Caco-2 (cell line): ENCODE measurements at regions of chr17 and their contacts with region 1.

Region 1: DNA sequence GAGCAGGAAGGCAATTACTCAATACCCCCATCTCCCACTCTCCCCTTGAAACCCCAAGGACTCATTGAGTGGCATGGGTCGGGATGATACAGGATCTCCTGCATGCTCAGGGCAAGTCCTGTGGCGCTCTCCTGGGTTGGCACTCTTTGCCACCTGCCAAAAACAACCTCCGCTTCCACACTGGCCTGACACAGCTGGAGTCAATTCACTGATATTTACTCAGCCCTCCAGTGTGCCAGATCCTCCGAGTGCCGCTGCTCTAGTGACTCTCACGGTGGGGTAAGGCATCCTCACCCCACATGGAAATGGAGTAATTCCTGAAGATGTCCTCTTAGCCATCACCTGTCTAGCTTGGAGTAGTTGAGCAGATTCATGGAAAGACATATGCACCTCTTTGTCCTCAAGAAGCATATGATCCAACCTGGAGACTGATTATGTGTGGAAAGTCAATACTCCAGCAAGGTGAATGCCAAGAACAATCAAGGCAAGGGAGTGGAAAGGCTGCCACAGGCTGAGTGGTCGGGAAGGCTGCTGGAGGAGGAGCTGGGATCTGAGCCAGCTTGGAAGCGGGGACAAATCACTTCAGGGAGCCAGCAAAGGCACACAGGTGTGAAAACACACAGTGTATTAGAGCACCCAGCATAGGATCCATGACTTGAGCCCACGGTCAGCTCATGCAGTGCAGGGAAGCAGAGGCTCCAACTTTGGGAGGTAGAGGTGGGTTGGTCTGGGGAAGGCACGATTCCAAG is 12.6 kb upstream of the GOSR2 start:
- DNase-seq: no peak
- H3K4me3 ChIP-seq: no peak overlapping the region
- H3K4me3 Mint-ChIP-seq: no peak overlapping the region
- H3K27ac Mint-ChIP-seq: no peak overlapping the region
- H3K4me1 ChIP-seq: no peaks in the 10 kb centered on the region
- H3K4me1 Mint-ChIP-seq: no peaks in the 10 kb centered on the region
- H3K27me3 ChIP-seq: no peaks in the 10 kb centered on the region
- H3K27me3 Mint-ChIP-seq: peaks cover 3% of the 10 kb centered on the region
- CTCF ChIP-seq: no peak

Region 2: DNA sequence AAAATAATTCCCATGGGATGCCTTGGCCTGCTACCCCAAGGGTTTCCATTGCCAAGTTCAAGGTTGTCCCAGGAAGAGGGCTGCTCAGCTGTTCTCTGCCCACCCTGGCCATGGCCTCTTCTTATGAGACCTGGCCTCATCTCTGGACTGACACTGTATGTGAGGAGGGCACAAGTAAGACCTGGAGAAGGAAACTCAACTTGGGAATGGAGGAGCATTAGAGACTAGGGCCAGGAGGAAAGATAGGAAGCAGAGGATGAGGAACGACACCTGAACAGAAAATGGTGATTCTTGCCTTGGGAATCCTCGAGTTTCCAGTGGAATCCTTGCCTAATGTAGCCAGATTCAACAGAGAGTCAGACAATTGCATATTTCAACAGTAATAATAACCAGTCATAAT is 12.0 kb before region 1 on chr17:
- CTCF ChIA-PET with region 1: no interaction called
- POLR2A ChIA-PET with region 1: interaction called, 10 read pairs
- intact Hi-C with region 1: no loop called
- DNase-seq: no peak
- H3K4me3 ChIP-seq: no peak overlapping the region
- H3K4me3 Mint-ChIP-seq: no peak overlapping the region
- H3K27ac Mint-ChIP-seq: no peak overlapping the region
- H3K4me1 ChIP-seq: no peaks in the 10 kb centered on the region
- H3K4me1 Mint-ChIP-seq: no peaks in the 10 kb centered on the region
- H3K27me3 ChIP-seq: no peaks in the 10 kb centered on the region
- H3K27me3 Mint-ChIP-seq: peaks cover 3% of the 10 kb centered on the region
- CTCF ChIP-seq: no peak